AG04449 (cell line): ENCODE measurements at regions of chr1 and their contacts with region 1.

Region 1: DNA sequence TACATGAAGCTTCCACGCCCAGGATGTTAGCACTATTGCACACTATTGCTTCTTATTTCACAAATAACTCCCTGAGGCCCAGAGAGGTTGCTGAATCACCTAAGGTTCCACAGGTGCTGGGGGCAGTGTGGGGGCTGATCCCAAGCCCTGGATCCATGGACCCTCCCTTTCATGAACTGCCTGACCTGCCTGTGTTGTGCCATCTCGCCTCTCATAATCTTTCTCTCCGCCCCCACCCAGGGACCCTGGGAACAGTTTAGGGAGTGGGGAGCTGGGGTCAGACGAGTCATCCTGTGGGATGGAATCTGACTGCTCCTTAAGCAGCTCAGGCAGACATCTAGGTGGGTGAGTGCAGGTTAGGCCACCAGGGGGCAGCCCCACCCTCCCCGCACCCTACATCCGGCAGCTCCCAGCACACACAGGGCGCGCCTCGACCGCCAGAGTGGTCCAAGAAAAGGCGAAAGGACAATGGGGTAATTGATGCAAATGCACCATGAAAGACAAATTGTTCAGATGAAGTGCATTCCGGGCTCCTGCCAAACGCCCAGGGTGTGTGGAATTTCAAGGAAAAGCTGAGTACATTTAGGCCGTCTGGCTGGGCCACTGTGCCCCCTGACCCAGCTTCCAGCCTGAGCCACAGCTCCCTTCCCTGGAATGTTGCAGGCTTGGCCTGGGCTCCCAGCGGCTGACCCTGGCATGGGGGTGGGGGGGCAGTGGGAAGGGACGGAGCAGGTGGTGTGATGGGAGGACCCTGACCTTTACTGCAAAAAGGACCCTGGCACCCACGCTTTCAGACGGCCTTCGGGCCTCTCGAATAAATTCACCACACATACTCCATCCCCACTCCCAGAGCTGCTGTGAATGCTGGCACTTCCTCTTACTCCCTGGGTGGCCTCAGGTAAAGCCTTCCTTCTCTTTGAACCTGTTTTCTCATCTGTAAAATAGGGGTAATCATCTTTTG is 20.8 kb downstream of the PHLDA3 start:
- DNase-seq: no peak
- H3K4me3 ChIP-seq: no peak overlapping the region
- CTCF ChIP-seq: peak; percentile 90

Region 2: DNA sequence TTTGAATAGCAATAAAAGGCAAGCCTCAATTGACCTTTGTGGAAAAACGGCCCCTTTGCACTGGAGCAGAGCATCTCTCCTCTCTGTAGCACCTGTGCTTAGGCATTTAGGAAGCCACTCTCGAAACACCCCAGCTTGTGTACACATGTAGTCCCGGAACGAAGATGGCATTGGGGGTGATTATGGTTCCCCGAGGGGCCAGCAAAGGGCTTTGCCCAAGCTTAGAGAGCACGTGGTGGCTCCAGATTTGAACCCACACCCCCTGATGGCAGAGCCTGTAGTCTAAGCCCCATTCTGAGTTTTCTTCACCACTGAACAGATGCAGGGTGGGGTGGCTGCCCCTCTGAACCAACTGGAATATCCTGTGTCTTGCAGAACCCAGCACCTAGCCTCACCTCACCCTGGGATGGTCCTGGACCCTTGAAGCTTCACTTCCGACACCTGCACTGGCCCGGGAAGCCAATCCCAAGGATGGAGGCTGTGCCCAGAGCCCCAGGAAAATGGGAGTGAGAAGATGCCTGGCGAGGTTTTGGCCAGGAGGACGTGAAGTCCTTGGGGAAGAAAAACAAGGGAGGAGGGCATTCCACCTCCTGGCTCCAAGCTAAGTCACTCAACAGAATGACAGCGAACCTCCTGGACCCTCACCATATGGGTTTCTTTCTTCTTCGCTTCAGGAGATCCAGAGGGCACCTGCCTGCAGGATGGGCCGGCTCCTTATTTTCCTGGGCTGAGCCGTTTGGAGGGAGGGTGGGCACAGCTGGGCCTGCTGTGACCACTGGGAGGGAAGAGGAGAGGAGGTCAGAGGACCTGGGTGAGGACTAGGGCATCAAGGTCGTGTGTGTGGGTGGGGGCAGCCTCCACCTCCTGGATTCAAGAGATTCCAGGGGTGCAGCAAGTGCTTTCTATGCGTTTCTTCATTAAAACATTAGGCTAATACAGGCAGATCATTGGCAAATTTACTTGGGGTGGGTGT is 219.9 kb before region 1 on chr1:
- CTCF ChIA-PET with region 1: no interaction called
- POLR2A ChIA-PET with region 1: no interaction called
- DNase-seq: no peak
- H3K4me3 ChIP-seq: no peak overlapping the region
- CTCF ChIP-seq: no peak

Region 3: DNA sequence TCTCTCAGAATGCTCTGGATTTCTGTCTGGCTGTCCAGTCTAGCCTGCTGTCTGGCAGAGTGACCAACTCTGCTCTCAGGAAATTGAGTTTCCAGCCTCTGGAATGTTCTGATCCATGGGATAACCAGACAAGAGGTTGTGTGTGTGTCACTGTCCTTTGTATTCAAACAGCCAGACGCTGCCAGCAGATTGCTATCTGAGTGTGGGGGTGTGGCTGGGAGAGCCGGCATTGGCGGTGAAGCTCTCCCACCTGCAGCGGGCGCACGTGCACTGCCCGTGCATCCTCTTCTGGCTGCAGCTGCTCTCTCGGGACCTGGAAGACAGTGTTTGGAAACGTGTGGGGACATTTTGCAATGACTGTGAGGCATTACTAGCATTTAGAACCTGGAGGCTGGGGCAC is 138.8 kb before region 1 on chr1:
- CTCF ChIA-PET with region 1: no interaction called
- POLR2A ChIA-PET with region 1: no interaction called
- DNase-seq: no peak
- H3K4me3 ChIP-seq: no peak overlapping the region
- CTCF ChIP-seq: no peak

Region 4: DNA sequence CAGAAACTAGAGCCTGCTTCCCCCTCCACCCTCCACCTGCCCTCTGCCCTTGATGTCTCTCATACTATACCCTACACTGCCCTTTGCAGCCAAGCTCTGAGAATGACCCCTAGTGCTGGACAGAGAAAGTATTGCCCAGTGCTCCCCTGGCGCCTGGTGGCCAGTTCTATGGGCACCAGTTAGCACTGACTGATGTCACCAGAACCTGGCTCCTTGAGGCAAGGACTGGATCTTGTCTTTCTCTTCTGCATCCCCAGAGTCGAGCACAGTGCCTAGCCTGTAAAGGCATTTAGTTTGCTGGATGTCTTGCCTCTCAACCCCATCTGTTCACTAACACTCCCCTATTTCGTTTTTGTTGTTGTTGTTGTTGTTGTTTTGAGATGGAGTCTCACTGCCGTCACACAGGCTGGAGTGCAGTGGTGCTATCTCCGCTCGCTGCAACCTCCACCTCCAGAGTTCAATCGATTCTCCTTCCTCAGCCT is 14.9 kb after region 1 on chr1:
- CTCF ChIA-PET with region 1: interaction called, 67 read pairs
- POLR2A ChIA-PET with region 1: interaction called, 13 read pairs
- DNase-seq: no peak
- H3K4me3 ChIP-seq: no peak overlapping the region
- CTCF ChIP-seq: peak; percentile 26

Region 5: GRCh38 chr1:201468844-201469511 is 20.8 kb after region 1 on chr1 and contains the start of gene PHLDA3:
- CTCF ChIA-PET with region 1: interaction called, 47 read pairs
- POLR2A ChIA-PET with region 1: interaction called, 9 read pairs
- DNase-seq: no peak
- H3K4me3 ChIP-seq: peak within 1 kb of the TSS; percentile 97
- CTCF ChIP-seq: no peak

Region 6: DNA sequence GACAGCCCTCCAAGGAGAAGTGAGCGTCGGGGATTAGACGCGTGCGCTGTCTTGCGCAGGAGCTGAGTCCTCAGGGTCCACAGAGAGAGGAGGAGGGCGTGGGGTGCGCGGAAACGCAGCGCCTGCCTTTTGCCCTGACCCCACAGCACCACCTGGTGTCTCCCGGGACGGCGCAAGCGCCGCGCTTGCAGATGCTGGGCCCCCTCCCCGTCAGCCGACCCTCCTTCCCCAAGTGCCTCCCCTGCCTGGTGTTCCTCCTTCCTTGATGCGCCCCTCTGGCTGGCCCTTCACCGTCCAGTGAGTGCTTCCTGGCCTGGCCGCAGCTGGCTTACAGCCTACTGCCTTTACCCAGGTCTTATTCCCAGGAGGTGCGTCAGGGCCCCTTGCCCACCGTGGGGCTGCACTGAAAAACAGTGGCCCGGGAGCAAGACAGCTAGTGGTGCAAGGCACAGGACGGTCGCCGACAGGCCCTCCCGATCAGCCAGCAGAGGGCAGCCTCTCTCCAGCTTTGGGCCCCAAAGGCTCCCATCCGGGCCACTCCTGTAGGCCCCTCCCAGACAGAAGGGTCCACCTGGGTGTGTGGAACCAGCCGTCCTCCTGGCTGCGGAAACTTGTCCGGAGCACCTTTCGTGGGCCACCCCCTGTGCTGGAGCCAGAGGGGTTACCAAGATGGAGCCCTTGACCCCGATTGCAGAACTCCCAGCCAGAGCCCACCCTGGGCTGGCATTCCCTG is 33.7 kb after region 1 on chr1:
- CTCF ChIA-PET with region 1: interaction called, 153 read pairs
- POLR2A ChIA-PET with region 1: interaction called, 3 read pairs
- DNase-seq: no peak
- H3K4me3 ChIP-seq: no peak overlapping the region; the same call in 1 of the 2 replicates
- CTCF ChIP-seq: peak; percentile 93

Region 7: GRCh38 chr1:201500670-201501120 is 52.5 kb after region 1 on chr1:
- CTCF ChIA-PET with region 1: interaction called, 30 read pairs
- POLR2A ChIA-PET with region 1: interaction called, 8 read pairs
- DNase-seq: no peak
- H3K4me3 ChIP-seq: no peak overlapping the region
- CTCF ChIP-seq: no peak

Region 8: DNA sequence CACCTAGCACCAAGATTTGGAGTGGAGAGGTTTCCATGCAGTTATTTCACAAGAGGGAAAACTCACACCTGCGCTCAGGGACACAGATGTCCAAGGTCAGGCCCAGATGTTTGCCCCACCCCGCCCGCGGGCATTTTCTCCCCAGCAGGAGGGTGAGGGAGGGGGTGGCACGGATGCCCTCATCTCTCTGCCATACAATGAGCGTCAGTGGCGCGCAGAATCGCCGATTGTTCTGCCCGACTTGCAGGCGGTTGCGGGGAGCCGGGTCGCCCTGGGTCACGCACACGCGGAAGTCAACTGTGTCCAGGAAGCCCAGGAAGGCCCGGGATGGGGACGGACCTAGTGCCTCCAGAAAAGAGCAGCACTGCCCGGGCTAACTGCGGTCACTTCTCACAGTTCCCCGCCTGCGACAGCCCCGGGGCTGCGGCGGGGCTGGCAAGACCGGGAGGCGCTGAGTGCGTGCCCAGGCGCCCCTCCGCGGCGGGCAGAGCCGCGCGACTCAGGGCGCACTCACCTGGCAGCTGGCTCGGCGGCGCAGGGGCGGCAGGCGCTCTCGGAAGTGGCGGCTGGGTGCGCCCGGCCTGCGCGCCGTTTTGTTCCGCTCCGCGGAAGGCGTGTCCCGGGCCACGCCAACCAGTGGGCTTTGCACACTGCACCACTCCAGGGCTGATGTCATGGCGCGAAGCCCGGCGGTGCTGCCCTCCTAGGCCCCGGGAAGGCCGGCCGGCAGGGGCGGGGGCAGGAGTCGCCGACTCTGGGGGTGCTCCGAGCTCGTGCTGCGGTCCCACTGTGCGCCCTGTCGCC is 58.6 kb after region 1 on chr1 and contains the start of gene CSRP1:
- CTCF ChIA-PET with region 1: interaction called, 305 read pairs
- POLR2A ChIA-PET with region 1: interaction called, 8 read pairs
- DNase-seq: no peak
- H3K4me3 ChIP-seq: peak within 1 kb of the TSS; percentile 83
- CTCF ChIP-seq: no peak

Region 9: DNA sequence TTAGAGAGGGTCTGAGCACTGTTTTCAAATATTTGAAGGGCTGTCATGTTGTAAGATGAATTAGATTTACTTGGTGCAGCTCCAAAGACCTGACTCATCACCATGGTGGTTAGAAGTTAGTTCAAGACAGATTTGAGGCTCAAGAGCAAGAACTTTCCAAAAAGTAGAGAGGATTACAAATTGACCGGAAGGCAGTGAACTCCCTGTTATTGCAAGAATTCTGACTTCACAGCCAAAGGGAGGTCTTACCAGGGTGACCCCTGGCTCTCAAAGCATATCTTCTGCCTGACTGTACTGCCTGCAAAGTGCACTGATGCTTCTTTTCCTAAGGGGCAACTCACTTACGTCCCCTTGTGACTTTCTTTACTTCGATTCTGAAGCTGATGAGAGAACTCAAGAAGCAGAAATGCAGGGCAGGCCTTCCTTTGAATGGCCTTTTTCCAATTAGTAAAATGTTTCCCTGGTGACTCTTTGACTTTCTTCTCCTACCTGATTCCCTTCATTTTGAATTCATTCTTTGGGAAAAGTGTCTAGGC is 177.1 kb after region 1 on chr1:
- CTCF ChIA-PET with region 1: no interaction called
- POLR2A ChIA-PET with region 1: no interaction called
- DNase-seq: peak; percentile 92
- H3K4me3 ChIP-seq: no peak overlapping the region
- CTCF ChIP-seq: peak; percentile 35